Right cardiac atrium (tissue), 5 donors: ENCODE measurements at regions of chr1 and their contacts with region 1.

Region 1: DNA sequence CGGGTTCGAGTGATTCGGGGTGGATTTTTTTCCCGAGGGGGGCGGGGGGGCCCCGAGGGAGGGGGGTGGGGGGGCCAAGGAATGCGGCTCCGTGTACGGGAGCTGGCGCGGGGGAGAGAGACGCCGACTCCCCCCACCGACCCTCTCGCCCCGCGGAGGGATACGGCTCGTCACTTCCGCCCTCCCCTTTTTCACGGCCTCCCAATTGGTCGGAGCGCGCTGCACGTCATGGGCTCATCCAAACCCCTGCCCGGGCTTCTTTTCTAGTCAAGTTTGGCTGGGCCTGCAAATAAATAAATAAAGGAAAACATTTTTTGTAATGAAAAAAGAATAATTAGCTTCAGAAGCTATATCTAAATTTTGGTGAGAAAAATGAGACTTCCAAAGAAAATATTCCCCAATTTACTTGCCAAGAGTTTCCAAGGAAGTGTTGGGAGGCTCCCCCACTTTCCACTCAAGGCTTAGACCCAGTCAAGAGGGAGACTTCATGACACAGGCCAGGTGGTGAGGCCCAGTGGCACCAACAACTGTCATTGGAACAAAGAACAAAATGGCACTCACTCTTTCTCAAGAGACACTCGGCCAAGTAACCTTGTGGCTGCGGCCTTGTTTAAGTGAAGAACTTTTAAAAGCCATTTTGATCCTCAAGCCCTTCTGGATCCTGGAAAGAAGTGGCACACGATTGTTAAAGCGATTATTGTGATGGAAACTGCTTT is at the start of gene POGZ:
- DNase-seq: peak; percentile 98 to 99 (median 99)
- ATAC-seq: peak; percentile 96
- H3K4me3 ChIP-seq: peak within 1 kb of the TSS; percentile 99
- H3K27ac ChIP-seq: peak within 1 kb of the TSS; percentile 99
- H3K4me1 ChIP-seq: no peaks in the 10 kb centered on the region
- H3K27me3 ChIP-seq: no peaks in the 10 kb centered on the region
- total RNA-seq, gene POGZ: 50.4 to 60.4 (median 52.2) TPM

Region 2: DNA sequence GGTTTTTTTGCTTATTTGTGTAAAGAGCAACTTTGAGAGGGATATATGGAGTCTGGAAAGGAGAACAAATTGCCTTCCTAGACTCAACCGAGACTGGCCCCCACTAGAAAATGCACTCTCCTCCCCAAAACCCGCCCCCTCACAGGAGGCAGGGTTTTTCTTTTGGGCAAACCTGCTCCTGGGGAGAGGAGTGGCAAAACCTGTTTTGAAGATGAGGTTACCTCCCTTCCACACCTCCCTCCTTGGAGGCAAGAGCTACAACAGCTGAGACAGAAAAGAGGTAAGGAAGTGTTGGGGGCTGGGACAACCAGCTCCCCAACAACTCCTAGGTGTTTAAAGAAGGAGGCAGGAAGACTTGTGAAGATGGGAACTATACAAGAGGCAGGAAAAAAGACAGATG is 423.1 kb before region 1 on chr1 and contains the start of gene BNIPL:
- intact Hi-C with region 1: no loop called
- DNase-seq: no peak
- ATAC-seq: no peak
- H3K4me3 ChIP-seq: no peak within 1 kb of the TSS
- H3K27ac ChIP-seq: no peak within 1 kb of the TSS
- H3K4me1 ChIP-seq: peaks cover 4% of the 10 kb centered on the region
- H3K27me3 ChIP-seq: no peaks in the 10 kb centered on the region
- total RNA-seq, gene BNIPL: 0.23 to 0.71 (median 0.50) TPM

Region 3: DNA sequence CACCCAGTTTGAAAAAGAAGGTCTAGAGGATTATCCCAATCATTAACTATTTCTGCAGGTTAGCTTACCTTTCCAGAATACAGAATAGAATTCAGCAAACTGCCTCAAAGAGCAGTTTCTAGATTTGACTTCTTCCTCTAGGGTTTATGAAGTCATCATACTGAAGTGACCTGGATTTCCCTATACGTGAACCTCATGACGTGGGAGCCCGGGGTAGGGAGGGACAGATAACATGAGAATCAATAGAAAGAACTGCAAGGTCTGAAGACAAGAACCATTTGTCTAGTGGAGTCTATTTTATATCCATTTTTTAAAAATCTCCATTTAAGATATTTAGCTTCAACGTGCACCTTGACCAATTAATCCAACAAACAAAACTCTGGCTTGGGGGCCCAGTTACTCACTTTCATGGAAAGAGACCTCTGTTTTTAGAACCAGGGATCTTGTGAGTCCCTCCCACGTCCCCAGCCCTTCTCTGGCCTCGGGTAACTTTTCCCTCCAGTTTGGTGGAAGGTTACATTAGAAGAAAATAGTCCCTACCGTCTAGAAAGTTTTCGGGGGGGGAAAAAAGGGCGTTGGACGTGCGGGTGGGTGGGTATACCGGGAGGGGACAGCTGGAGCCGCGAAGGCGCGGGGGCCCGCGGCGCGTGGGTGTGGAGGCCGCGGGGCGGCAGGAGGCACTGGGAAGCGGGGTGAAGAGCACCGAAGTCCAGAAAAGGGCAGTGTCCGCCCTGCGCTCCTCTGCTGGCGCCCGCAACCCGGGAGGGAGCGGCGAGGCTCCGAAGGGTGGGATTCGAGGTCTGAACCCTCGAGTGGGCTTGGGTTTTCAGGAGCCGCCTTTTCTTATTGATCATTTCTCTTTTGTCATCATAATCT is 13.6 kb after region 1 on chr1:
- intact Hi-C with region 1: loop called in 1 of 4 experiments (anchors 2 kb)
- DNase-seq: peak; percentile 54 to 80 (median 72)
- ATAC-seq: peak; percentile 88 to 93
- H3K4me3 ChIP-seq: peak overlapping the region; percentile 80
- H3K27ac ChIP-seq: peak overlapping the region; percentile 3
- H3K4me1 ChIP-seq: no peaks in the 10 kb centered on the region
- H3K27me3 ChIP-seq: no peaks in the 10 kb centered on the region